Mammary epithelial cell (primary cell): ENCODE measurements at regions of chr1 and their contacts with region 1.

Region 1: GRCh38 chr1:226708342-226708780 is 30.7 kb downstream of the ITPKB start:
- DNase-seq: peak; percentile 91
- H3K4me3 ChIP-seq: no peak overlapping the region
- H3K27ac ChIP-seq: no peak overlapping the region
- H3K4me1 ChIP-seq: peaks cover 33% of the 10 kb centered on the region
- H3K27me3 ChIP-seq: no peaks in the 10 kb centered on the region
- CTCF ChIP-seq: no peak

Region 2: GRCh38 chr1:226135059-226135651 is 573.2 kb before region 1 on chr1:
- CTCF ChIA-PET with region 1: no interaction called
- dilution Hi-C with region 1: no loop called
- in situ Hi-C with region 1: no loop called
- intact Hi-C with region 1: no loop called
- DNase-seq: no peak
- H3K4me3 ChIP-seq: no peak overlapping the region
- H3K27ac ChIP-seq: no peak overlapping the region
- H3K4me1 ChIP-seq: peaks cover 10% of the 10 kb centered on the region
- H3K27me3 ChIP-seq: no peaks in the 10 kb centered on the region
- CTCF ChIP-seq: no peak

Region 3: GRCh38 chr1:226181996-226182714 is 526.2 kb before region 1 on chr1:
- CTCF ChIA-PET with region 1: no interaction called
- dilution Hi-C with region 1: no loop called
- in situ Hi-C with region 1: no loop called
- intact Hi-C with region 1: no loop called
- DNase-seq: peak; percentile 50
- H3K4me3 ChIP-seq: no peak overlapping the region
- H3K27ac ChIP-seq: no peak overlapping the region
- H3K4me1 ChIP-seq: peaks cover 29% of the 10 kb centered on the region
- H3K27me3 ChIP-seq: no peaks in the 10 kb centered on the region
- CTCF ChIP-seq: peak; percentile 26 to 43

Region 4: DNA sequence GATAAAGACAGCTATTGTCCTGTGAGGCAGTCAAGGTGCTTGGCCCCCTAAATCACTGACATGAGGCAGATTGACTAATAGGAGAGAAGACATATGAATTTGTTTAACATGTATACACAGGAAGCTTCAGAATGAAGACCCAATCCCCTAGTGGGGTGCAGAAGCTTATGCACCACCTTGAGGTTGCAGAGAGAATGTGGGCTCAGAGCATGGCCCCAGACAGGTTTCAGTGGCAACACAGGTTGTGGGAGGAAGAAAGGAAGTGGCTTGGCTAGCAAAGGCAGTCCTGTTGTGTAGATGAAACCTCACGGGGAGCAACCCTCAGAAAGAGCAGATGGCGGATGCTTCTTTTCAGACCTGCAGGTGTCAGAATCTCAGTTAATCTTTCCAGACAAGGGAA is 263.5 kb before region 1 on chr1:
- CTCF ChIA-PET with region 1: no interaction called
- dilution Hi-C with region 1: no loop called
- in situ Hi-C with region 1: no loop called
- intact Hi-C with region 1: no loop called
- DNase-seq: no peak
- H3K4me3 ChIP-seq: no peak overlapping the region
- H3K27ac ChIP-seq: no peak overlapping the region
- H3K4me1 ChIP-seq: no peaks in the 10 kb centered on the region
- H3K27me3 ChIP-seq: peaks cover 3% of the 10 kb centered on the region
- CTCF ChIP-seq: no peak

Region 5: GRCh38 chr1:226461087-226461486 is 247.3 kb before region 1 on chr1:
- CTCF ChIA-PET with region 1: interaction called, 11 read pairs
- dilution Hi-C with region 1: no loop called
- in situ Hi-C with region 1: no loop called
- intact Hi-C with region 1: no loop called
- DNase-seq: no peak
- H3K4me3 ChIP-seq: no peak overlapping the region
- H3K27ac ChIP-seq: no peak overlapping the region
- H3K4me1 ChIP-seq: no peaks in the 10 kb centered on the region
- H3K27me3 ChIP-seq: no peaks in the 10 kb centered on the region
- CTCF ChIP-seq: no peak

Region 6: DNA sequence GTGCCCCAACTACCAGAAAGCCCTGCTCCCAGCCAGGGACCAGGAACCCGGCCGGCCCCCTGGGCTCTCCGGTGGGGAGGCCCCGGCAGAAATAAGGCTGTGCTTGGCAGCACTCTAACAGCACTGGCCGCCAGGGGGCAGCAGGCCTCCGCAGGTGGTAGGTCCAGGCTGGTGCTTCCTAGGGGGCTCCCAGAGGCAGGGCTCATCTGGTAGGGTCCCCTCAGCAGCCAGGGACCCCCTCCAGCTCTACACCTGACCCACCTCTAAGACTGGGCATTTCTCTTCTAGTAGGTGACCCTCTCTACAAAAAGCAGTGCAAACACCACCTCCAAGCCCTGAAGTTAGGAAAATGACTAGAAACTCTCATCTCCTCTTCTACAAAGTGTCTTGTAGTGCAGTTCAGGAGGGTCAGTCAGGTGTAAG is 74.2 kb before region 1 on chr1:
- CTCF ChIA-PET with region 1: no interaction called
- dilution Hi-C with region 1: no loop called
- in situ Hi-C with region 1: no loop called
- intact Hi-C with region 1: loop called (anchors 2 kb)
- DNase-seq: peak; percentile 32
- H3K4me3 ChIP-seq: no peak overlapping the region
- H3K27ac ChIP-seq: no peak overlapping the region
- H3K4me1 ChIP-seq: peaks cover 7% of the 10 kb centered on the region
- H3K27me3 ChIP-seq: no peaks in the 10 kb centered on the region
- CTCF ChIP-seq: peak; percentile 73 to 96

Region 7: GRCh38 chr1:226731257-226731893 is 23.0 kb after region 1 on chr1:
- CTCF ChIA-PET with region 1: no interaction called
- dilution Hi-C with region 1: no loop called
- in situ Hi-C with region 1: no loop called
- intact Hi-C with region 1: no loop called
- DNase-seq: no peak
- H3K4me3 ChIP-seq: no peak overlapping the region
- H3K27ac ChIP-seq: no peak overlapping the region
- H3K4me1 ChIP-seq: no peaks in the 10 kb centered on the region
- H3K27me3 ChIP-seq: no peaks in the 10 kb centered on the region
- CTCF ChIP-seq: no peak

Region 8: GRCh38 chr1:226784081-226785049 is 76.0 kb after region 1 on chr1:
- CTCF ChIA-PET with region 1: no interaction called
- dilution Hi-C with region 1: loop called (anchors 5 kb)
- in situ Hi-C with region 1: no loop called
- intact Hi-C with region 1: no loop called
- DNase-seq: no peak
- H3K4me3 ChIP-seq: no peak overlapping the region
- H3K27ac ChIP-seq: no peak overlapping the region
- H3K4me1 ChIP-seq: peaks cover 4% of the 10 kb centered on the region
- H3K27me3 ChIP-seq: peaks cover 5% of the 10 kb centered on the region
- CTCF ChIP-seq: no peak